PC-3 (cell line): ENCODE measurements at regions of chr2 and their contacts with region 1.

Region 1: GRCh38 chr2:56132138-56132537 is 51.7 kb upstream of the CCDC85A start:
- DNase-seq: peak; percentile 71
- ATAC-seq: 0 out of 2 replicates have a peak, but pooled peaks have one; percentile 43
- H3K4me3 ChIP-seq: no peak overlapping the region
- H3K27ac ChIP-seq: no peak overlapping the region
- H3K4me1 ChIP-seq: no peaks in the 10 kb centered on the region
- H3K27me3 ChIP-seq: peaks cover 42% of the 10 kb centered on the region
- CTCF ChIP-seq: peak; percentile 72

Region 2: GRCh38 chr2:55718165-55719008 is 413.8 kb before region 1 on chr2:
- CTCF ChIA-PET with region 1: no interaction called
- POLR2A ChIA-PET with region 1: no interaction called
- intact Hi-C with region 1: loop called (anchors 1 kb)
- DNase-seq: peak; percentile 86
- ATAC-seq: peak; percentile 74
- H3K4me3 ChIP-seq: no peak overlapping the region
- H3K27ac ChIP-seq: no peak overlapping the region
- H3K4me1 ChIP-seq: peaks cover 22% of the 10 kb centered on the region
- H3K27me3 ChIP-seq: no peaks in the 10 kb centered on the region
- CTCF ChIP-seq: peak; percentile 93

Region 3: DNA sequence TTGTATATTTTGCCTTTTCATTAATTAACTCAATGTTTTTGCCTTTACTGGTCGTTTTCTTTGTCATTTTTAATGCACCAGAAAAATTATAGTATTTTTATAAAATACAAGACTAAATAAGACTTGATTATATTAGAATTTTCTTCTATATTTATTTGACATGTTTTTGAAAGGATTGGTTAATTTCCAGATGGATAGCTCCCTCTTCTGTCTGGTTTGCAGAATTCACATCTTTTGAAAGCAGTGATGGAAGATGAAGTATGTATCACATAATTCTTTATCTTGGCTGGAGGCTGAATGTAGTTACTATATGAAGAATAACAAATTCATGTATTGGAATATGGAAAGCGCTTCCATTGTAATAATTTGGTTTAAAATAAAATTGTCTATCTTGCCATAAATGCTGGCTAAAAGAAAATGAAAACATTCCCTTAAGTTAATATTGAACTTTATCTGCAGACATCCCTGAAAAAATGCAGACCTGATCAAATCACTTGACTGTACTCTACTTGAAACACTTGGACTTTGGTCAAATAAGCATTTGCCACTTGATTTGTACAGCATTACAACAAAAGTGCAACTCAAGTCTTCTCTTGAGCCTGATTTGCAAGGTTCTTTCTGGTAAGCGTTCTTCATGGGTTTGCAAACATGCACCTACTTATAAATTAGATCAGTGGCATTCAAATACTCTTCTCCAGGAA is 122.2 kb before region 1 on chr2:
- CTCF ChIA-PET with region 1: interaction called, 3 read pairs
- POLR2A ChIA-PET with region 1: interaction called, 14 read pairs
- intact Hi-C with region 1: loop called (anchors 5 kb)
- DNase-seq: peak; percentile 72
- ATAC-seq: no peak
- H3K4me3 ChIP-seq: no peak overlapping the region
- H3K27ac ChIP-seq: no peak overlapping the region
- H3K4me1 ChIP-seq: peaks cover 10% of the 10 kb centered on the region; the same call in 1 of the 2 replicates
- H3K27me3 ChIP-seq: no peaks in the 10 kb centered on the region
- CTCF ChIP-seq: peak; percentile 73

Region 4: DNA sequence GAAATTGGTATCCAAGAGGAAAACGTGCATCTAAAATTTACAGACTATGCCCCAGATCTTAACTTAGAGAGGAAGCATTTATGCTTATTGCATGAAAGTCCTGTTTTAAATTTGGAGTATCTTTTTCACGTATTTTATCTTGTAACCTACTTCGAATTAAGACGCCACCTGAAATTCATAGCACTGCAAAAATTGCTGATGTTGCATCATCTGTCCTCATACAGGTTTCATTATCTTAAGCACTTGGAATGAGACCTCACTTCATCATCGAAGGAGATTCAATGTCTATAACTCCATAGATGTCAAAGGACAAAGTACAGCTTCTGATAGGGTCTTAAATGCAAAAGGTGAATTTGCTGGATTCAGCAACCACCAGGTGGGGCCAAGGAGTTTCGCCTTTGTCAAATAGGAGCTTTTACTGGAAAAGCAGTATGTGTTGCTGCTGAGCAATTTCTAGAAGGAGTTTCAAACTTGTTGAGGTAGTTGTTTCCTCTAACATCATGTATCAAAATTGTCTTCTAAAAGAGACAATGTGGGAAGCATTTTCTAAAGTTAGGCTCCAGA is 54.7 kb before region 1 on chr2:
- CTCF ChIA-PET with region 1: interaction called, 8 read pairs
- POLR2A ChIA-PET with region 1: no interaction called
- intact Hi-C with region 1: loop called (anchors 1 kb)
- DNase-seq: peak; percentile 68
- ATAC-seq: peak; percentile 49; the same call in 1 of the 2 replicates
- H3K4me3 ChIP-seq: no peak overlapping the region
- H3K27ac ChIP-seq: no peak overlapping the region
- H3K4me1 ChIP-seq: no peaks in the 10 kb centered on the region
- H3K27me3 ChIP-seq: peaks cover 48% of the 10 kb centered on the region
- CTCF ChIP-seq: peak; percentile 84